Ascending aorta (tissue), 2 donors: ENCODE measurements at regions of chr22 and their contacts with region 1.

Region 1: DNA sequence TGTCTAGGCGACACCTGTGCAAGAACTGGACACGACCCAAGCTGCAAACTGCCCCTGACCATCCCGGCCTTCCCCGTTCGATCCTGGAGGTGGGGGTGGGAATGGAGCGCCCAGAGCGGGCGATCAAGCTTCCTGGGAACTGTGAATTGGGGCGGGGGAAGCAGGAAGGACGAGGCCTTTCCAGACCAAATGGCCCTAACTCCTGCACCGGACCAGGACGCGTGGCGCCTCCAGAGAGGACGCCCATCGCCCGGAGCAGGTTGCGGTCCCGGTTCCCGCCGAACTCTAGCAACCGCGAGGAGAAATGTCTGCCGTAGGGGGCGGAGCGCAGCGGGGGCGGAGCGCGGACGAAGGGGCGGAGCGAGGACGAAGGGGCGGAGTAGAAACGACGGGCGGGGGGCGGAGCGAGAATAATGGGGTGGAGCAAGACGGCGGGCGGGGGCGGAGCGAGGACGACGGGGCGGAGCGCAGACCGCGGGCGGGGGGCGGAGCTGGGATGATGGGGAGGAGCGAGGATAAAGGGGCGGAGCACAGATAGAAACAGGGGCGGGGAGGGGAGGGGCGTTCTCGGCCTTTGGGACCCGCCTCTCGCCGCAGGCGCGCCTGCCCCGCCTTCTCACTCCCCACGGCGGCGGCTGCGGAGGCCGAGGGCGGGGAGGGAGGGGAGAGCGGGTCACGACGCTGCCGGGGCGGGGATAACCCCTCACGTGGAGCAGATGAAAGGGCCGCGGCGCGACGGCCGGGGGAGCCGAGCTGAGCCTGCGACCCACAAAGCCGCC is at the start of gene ZNRF3:
- DNase-seq: peak; percentile 63 to 94
- H3K4me3 ChIP-seq: peak within 1 kb of the TSS; percentile 61 to 71
- H3K27ac ChIP-seq: peak within 1 kb of the TSS; percentile 45 to 83
- H3K4me1 ChIP-seq: peaks cover 0 to 15% of the 10 kb centered on the region in 2 donors
- H3K27me3 ChIP-seq: no peaks in the 10 kb centered on the region
- CTCF ChIP-seq: peak in 1 of 3 experiments; percentile 12
- total RNA-seq, gene ZNRF3: 49.1 TPM

Region 2: DNA sequence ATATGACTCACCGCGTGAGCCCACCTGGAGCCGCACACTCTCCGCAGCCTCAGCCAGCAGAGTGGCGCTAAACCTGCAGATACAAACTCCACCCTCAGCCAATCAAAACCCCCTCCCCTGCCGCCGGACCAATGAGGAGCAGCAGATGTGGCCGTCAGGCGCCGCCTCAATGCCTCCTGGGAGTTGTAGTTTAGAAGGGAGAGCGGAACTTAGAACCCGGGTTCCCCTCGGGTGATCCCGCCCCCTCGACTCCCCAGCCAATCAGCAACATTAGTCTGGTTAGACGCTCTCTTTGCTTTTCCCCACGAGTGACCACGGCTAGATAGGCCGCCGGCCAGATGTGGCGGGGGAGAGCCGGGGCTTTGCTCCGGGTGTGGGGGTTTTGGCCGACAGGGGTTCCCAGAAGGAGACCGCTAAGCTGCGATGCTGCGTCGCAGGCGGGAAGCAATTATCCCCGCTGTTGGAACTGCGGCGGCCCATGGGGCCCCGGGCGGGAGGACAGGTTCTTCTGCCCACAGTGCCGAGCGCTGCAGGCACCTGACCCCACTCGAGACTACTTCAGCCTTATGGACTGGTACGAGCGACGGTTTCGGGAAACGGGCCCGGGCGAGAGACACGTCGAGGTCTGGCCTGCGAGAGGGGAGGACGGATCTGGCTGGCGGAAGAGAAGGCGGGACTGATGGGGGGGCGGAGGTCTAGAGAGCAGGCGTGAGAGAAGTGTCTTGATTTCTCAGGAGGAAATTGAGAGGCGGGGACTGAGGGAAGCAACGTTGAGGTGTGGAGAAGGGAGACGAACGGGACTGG is 141.1 kb before region 1 on chr22 and contains the starts of genes CHEK2 and HSCB:
- intact Hi-C with region 1: loop called (anchors 2 kb)
- DNase-seq: peak; percentile 96 to 99
- H3K4me3 ChIP-seq: peak within 1 kb of the TSS; percentile 65 to 98
- H3K27ac ChIP-seq: peak within 1 kb of the TSS; percentile 98 to 100
- H3K4me1 ChIP-seq: peaks cover 0 to 8% of the 10 kb centered on the region in 2 donors
- H3K27me3 ChIP-seq: no peaks in the 10 kb centered on the region
- CTCF ChIP-seq: no peak
- total RNA-seq, gene CHEK2: 1.3 TPM
- total RNA-seq, gene HSCB: 0.85 TPM

Region 3: GRCh38 chr22:28800308-28801077 is 82.6 kb before region 1 on chr22 and contains the start of gene XBP1:
- intact Hi-C with region 1: loop called (anchors 5 kb)
- DNase-seq: peak; percentile 76 to 97
- H3K4me3 ChIP-seq: peak within 1 kb of the TSS; percentile 96 to 100
- H3K27ac ChIP-seq: peak within 1 kb of the TSS; percentile 100
- H3K4me1 ChIP-seq: peaks cover 17 to 30% of the 10 kb centered on the region in 2 donors
- H3K27me3 ChIP-seq: no peaks in the 10 kb centered on the region
- CTCF ChIP-seq: no peak
- total RNA-seq, gene XBP1: 158 TPM

Region 4: GRCh38 chr22:28911777-28912669 is 29.0 kb after region 1 on chr22:
- intact Hi-C with region 1: loop called (anchors 2 kb)
- DNase-seq: no peak
- H3K4me3 ChIP-seq: peak overlapping the region in 1 of 2 donors; percentile 12
- H3K27ac ChIP-seq: peak overlapping the region; percentile 75 to 81
- H3K4me1 ChIP-seq: peaks cover 14 to 70% of the 10 kb centered on the region in 2 donors
- H3K27me3 ChIP-seq: no peaks in the 10 kb centered on the region
- CTCF ChIP-seq: no peak

Region 5: GRCh38 chr22:28923826-28924732 is 41.0 kb after region 1 on chr22:
- intact Hi-C with region 1: no loop called
- DNase-seq: no peak
- H3K4me3 ChIP-seq: peak overlapping the region; percentile 13 to 55
- H3K27ac ChIP-seq: peak overlapping the region; percentile 44 to 75
- H3K4me1 ChIP-seq: peaks cover 3 to 25% of the 10 kb centered on the region in 2 donors
- H3K27me3 ChIP-seq: no peaks in the 10 kb centered on the region
- CTCF ChIP-seq: no peak

Region 6: GRCh38 chr22:28951969-28952521 is 69.0 kb after region 1 on chr22:
- intact Hi-C with region 1: loop called (anchors 2 kb)
- DNase-seq: no peak
- H3K4me3 ChIP-seq: peak overlapping the region in 1 of 2 donors; percentile 9
- H3K27ac ChIP-seq: peak overlapping the region in 1 of 2 donors; percentile 62
- H3K4me1 ChIP-seq: peaks cover 8 to 40% of the 10 kb centered on the region in 2 donors
- H3K27me3 ChIP-seq: no peaks in the 10 kb centered on the region
- CTCF ChIP-seq: peak; percentile 17 to 49 (median 26)

Region 7: GRCh38 chr22:29031227-29032011 is 148.4 kb after region 1 on chr22:
- intact Hi-C with region 1: loop called (anchors 1 kb)
- DNase-seq: peak; percentile 77 to 93
- H3K4me3 ChIP-seq: peak overlapping the region; percentile 57
- H3K27ac ChIP-seq: peak overlapping the region; percentile 92 to 97
- H3K4me1 ChIP-seq: peaks cover 16 to 29% of the 10 kb centered on the region in 2 donors
- H3K27me3 ChIP-seq: no peaks in the 10 kb centered on the region
- CTCF ChIP-seq: peak in 1 of 3 experiments; percentile 8